ENCODE measurements at regions of chr3 and their contacts with region 1.

Region 1: GRCh38 chr3:20225769-20226168 is 39.8 kb upstream of the SGO1 start:
- DNase-seq: peak; percentile 3 to 49
- H3K4me3 ChIP-seq: no peak overlapping the region
- H3K27ac ChIP-seq: no peak overlapping the region
- H3K4me1 ChIP-seq: no peaks in the 10 kb centered on the region
- H3K27me3 ChIP-seq: no peaks in the 10 kb centered on the region
- CTCF ChIP-seq: peak; percentile 62

Region 2: GRCh38 chr3:19293295-19293694 is 932.5 kb before region 1 on chr3:
- CTCF ChIA-PET with region 1: no interaction called
- POLR2A ChIA-PET with region 1: no interaction called
- intact Hi-C with region 1: no loop called
- DNase-seq: no peak
- H3K4me3 ChIP-seq: no peak overlapping the region
- H3K27ac ChIP-seq: no peak overlapping the region
- H3K4me1 ChIP-seq: no peaks in the 10 kb centered on the region
- H3K27me3 ChIP-seq: no peaks in the 10 kb centered on the region
- CTCF ChIP-seq: no peak

Region 3: DNA sequence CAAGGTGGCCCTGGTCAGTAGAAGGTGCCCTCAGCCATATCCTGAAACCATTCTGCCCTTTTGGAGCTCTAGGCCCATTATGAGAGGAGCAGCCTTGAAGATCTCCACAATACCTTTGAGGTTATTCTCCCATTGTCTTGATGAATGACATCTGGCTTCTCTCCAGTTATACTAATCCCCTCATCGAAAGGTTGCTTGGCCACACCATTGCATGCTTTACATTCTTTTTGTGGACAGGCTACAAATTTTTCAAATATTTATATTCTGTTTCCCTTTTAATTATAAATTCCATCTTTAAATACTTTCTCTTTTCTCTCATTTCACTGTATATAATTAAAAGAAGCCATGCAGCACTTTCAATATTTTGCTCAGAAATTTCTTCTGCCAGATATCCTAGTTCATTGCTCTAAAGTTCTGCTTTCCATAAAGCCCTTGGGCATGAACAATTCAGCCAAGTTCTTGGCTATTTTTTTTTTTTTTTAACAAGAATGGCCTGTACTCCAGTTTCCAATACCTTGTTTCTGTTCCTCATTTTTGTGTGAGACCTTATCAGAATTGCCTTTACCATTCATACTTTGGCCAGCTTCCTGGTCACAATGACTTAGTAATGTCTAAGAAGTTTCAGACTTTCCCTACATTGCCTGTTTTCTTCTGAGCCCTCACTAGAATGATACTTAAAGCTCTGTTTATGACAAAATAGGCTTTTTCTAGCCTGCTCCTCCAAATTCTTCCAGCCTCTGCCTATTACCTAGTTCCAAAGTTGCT is 99.1 kb after region 1 on chr3:
- CTCF ChIA-PET with region 1: no interaction called
- POLR2A ChIA-PET with region 1: no interaction called
- intact Hi-C with region 1: loop called (anchors 2 kb)
- DNase-seq: peak; percentile 36 to 78
- H3K4me3 ChIP-seq: no peak overlapping the region
- H3K27ac ChIP-seq: peak overlapping the region; percentile 78
- H3K4me1 ChIP-seq: no peaks in the 10 kb centered on the region; the same call in 1 of the 2 replicates
- H3K27me3 ChIP-seq: no peaks in the 10 kb centered on the region
- CTCF ChIP-seq: no peak

Region 4: GRCh38 chr3:21551019-21551418 is 1325.2 kb after region 1 on chr3:
- CTCF ChIA-PET with region 1: no interaction called
- POLR2A ChIA-PET with region 1: no interaction called
- intact Hi-C with region 1: loop called (anchors 5 kb)
- DNase-seq: peak in 1 of 2 experiments; percentile 8
- H3K4me3 ChIP-seq: no peak overlapping the region
- H3K27ac ChIP-seq: no peak overlapping the region
- H3K4me1 ChIP-seq: no peaks in the 10 kb centered on the region
- H3K27me3 ChIP-seq: no peaks in the 10 kb centered on the region
- CTCF ChIP-seq: no peak

Region 5: DNA sequence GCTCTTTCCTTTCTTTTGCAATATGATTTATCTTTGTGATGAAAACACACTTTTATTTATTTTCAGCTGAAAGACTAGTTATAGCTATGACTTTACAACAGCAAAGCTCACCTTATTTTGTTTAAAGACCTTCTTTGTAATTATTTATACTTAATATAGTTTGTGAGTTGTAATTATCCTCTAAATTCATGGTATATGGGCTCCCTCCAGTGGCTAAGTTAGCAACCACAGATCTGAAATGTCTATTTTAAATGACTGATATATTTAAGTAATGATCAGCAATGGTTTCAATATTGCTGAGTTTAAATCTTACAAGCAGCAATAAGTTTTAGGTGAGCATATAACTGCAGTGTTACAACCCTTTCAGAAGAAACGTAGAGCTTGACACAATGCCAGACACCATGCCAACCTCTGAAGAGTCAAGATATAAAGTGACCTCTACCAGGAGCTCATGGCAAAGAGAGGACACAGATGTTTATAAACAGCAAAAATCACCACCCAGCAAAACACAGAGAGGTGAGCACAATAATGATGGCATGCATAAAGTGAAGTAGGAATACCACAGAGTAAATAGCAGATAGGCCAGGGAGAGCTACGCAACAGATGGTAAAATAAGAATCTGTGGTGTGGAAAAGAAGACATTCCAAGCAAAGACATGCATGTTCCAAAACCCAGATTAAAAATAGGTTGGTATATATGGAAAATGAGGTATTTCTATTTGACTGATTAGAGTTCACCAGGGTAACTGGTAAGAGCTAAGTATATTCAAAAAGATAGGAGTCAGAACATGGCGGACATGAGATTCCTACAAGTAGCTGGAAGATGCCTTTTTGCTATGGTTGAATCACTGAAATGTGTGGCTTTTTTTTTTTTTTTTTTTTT is 1668.9 kb after region 1 on chr3:
- CTCF ChIA-PET with region 1: no interaction called
- POLR2A ChIA-PET with region 1: no interaction called
- intact Hi-C with region 1: loop called (anchors 5 kb)
- DNase-seq: no peak
- H3K4me3 ChIP-seq: no peak overlapping the region
- H3K27ac ChIP-seq: no peak overlapping the region
- H3K4me1 ChIP-seq: no peaks in the 10 kb centered on the region
- H3K27me3 ChIP-seq: no peaks in the 10 kb centered on the region
- CTCF ChIP-seq: peak; percentile 80

Region 6: GRCh38 chr3:22117751-22118346 is 1892.1 kb after region 1 on chr3:
- CTCF ChIA-PET with region 1: no interaction called
- POLR2A ChIA-PET with region 1: no interaction called
- intact Hi-C with region 1: loop called (anchors 5 kb)
- DNase-seq: no peak
- H3K4me3 ChIP-seq: no peak overlapping the region
- H3K27ac ChIP-seq: no peak overlapping the region
- H3K4me1 ChIP-seq: no peaks in the 10 kb centered on the region
- H3K27me3 ChIP-seq: no peaks in the 10 kb centered on the region
- CTCF ChIP-seq: peak; percentile 88